ENCODE measurements at regions of chr1 and their contacts with region 1.

Region 1: GRCh38 chr1:202615501-202616354 is 94.5 kb downstream of the SYT2 start:
- DNase-seq: no peak
- H3K4me3 ChIP-seq: no peak overlapping the region
- CTCF ChIP-seq: no peak

Region 2: DNA sequence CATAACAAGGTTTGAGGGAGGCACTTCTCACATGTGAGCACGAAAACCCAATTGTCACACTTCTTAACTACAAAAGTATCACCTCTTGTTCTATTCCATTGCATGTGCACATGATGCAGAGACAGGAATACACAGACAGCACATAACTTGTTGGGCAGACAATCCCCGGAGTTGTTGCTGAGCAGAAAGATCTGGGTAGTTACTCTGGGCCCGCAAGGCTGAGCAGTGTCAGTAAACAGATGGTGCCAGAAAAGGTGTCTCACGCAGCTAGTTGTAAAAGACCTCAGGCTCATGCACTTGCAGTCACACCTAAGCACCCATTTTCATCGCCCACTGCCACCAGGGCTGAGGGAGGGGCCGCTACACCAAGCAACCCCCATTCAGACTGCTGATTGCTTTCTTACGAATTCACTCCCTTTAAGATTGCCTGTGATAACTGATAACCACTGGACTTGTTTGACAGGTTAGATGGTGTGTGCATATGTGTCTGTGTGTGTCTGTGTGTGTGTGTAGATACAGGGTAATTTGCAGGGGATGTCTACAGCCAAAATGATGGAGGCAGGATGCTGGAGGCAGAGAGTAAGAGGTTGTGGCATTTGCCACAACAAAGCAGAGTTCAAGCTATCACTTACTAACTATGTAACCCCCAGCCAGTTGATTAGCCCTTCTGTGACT is 417.9 kb before region 1 on chr1:
- CTCF ChIA-PET with region 1: no interaction called
- POLR2A ChIA-PET with region 1: no interaction called
- DNase-seq: no peak
- H3K4me3 ChIP-seq: no peak overlapping the region
- CTCF ChIP-seq: no peak

Region 3: GRCh38 chr1:202501281-202501680 is 114.4 kb before region 1 on chr1:
- CTCF ChIA-PET with region 1: interaction called, 20 read pairs
- POLR2A ChIA-PET with region 1: no interaction called
- DNase-seq: no peak
- H3K4me3 ChIP-seq: no peak overlapping the region
- CTCF ChIP-seq: peak; percentile 10

Region 4: GRCh38 chr1:202643397-202644218 is 27.9 kb after region 1 on chr1:
- CTCF ChIA-PET with region 1: no interaction called
- POLR2A ChIA-PET with region 1: no interaction called
- DNase-seq: no peak
- H3K4me3 ChIP-seq: 0 out of 2 replicates have a peak overlapping the region, but pooled peaks have one; percentile 6
- CTCF ChIP-seq: no peak